Caco-2 (cell line): ENCODE measurements at regions of chr4 and their contacts with region 1.

Region 1: GRCh38 chr4:33060674-33061542 is 2340.7 kb downstream of the PCDH7 start:
- DNase-seq: peak; percentile 59 to 64
- H3K4me3 ChIP-seq: no peak overlapping the region
- H3K4me3 Mint-ChIP-seq: no peak overlapping the region
- H3K27ac Mint-ChIP-seq: no peak overlapping the region
- H3K4me1 ChIP-seq: no peaks in the 10 kb centered on the region
- H3K4me1 Mint-ChIP-seq: peaks cover 6% of the 10 kb centered on the region
- H3K27me3 ChIP-seq: no peaks in the 10 kb centered on the region
- H3K27me3 Mint-ChIP-seq: no peaks in the 10 kb centered on the region
- CTCF ChIP-seq: peak; percentile 79 to 88

Region 2: GRCh38 chr4:32798471-32799159 is 262.3 kb before region 1 on chr4:
- CTCF ChIA-PET with region 1: no interaction called
- POLR2A ChIA-PET with region 1: no interaction called
- intact Hi-C with region 1: loop called (anchors 2 kb)
- DNase-seq: no peak
- H3K4me3 ChIP-seq: no peak overlapping the region
- H3K4me3 Mint-ChIP-seq: no peak overlapping the region
- H3K27ac Mint-ChIP-seq: no peak overlapping the region
- H3K4me1 ChIP-seq: no peaks in the 10 kb centered on the region
- H3K4me1 Mint-ChIP-seq: no peaks in the 10 kb centered on the region
- H3K27me3 ChIP-seq: no peaks in the 10 kb centered on the region
- H3K27me3 Mint-ChIP-seq: no peaks in the 10 kb centered on the region
- CTCF ChIP-seq: no peak

Region 3: DNA sequence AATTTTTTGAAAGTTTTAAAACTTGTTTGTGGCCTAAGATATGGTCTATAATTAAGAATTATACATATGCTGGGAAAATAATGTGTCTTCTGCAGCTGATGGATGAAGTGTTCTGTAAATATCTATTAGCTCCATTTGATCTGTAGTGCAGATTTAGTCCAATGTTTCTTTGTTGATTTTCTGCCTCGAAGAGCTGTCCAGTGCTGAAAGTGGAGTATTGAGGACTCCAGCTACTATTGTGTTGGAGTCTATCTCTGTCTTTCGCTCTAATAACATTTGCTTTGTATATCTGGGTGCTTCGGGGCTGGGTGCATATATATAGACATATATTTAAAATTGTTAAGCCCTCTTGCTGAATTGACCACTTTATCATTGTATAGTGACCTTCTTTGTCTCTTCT is 213.4 kb before region 1 on chr4:
- CTCF ChIA-PET with region 1: no interaction called
- POLR2A ChIA-PET with region 1: no interaction called
- intact Hi-C with region 1: loop called (anchors 10 kb)
- DNase-seq: peak in 1 of 2 experiments; percentile 24
- H3K4me3 ChIP-seq: no peak overlapping the region
- H3K4me3 Mint-ChIP-seq: no peak overlapping the region
- H3K27ac Mint-ChIP-seq: no peak overlapping the region
- H3K4me1 ChIP-seq: no peaks in the 10 kb centered on the region
- H3K4me1 Mint-ChIP-seq: no peaks in the 10 kb centered on the region
- H3K27me3 ChIP-seq: no peaks in the 10 kb centered on the region
- H3K27me3 Mint-ChIP-seq: no peaks in the 10 kb centered on the region
- CTCF ChIP-seq: no peak